Common myeloid progenitor, CD34-positive (primary cell): ENCODE measurements at regions of chr14 and their contacts with region 1.

Region 1: DNA sequence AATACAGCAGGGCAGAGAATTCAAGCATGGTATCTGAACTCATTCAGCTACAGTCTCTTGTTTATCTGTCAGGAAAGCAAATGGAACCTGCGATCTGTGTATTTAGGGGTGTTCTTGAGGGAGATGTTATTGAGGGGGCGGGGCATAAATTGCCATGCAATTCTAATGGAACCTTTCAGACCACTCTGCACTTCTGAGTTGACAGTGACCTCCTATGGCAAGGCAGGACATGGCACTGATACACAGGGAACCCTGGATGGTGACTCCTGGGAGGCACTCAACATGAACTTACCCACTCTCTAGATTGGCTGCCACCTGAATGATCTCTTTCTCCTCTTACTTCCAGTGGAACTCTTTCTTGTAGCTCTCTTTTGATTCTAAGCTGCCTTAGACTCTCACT is 787.3 kb downstream of the VRK1 start:
- DNase-seq: peak; percentile 50 to 73 (median 71)
- H3K4me3 ChIP-seq: no peak overlapping the region
- H3K27ac ChIP-seq: no peak overlapping the region
- H3K4me1 ChIP-seq: no peaks in the 10 kb centered on the region
- H3K27me3 ChIP-seq: no peaks in the 10 kb centered on the region

Region 2: DNA sequence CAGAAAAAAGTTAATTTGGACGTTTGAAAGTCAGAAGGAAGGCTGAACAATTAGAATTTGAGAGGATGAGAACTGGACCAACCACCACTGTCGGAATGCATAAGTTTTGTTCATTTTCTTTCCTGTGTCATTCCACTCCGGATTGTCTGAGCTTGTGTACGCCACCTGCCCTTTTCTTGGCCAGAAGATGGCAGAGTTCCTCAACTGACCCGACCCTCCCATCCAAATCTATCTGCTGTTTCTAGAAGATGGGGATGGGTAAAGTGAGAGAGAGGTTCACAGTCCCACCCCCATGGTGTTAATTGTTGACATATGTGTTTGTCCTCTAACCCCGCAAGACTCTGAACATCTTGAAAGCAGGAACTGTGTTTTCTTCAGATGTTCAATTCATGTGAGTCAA is 399.3 kb before region 1 on chr14:
- CTCF ChIA-PET with region 1: interaction called, 22 read pairs
- POLR2A ChIA-PET with region 1: no interaction called
- DNase-seq: peak; percentile 25 to 60 (median 53)
- H3K4me3 ChIP-seq: no peak overlapping the region
- H3K27ac ChIP-seq: no peak overlapping the region
- H3K4me1 ChIP-seq: peaks cover 0 to 5% (median 2%) of the 10 kb centered on the region in 4 experiments
- H3K27me3 ChIP-seq: peaks cover 0 to 7% (median 0%) of the 10 kb centered on the region in 5 experiments